Psoas muscle (tissue), 8 donors: ENCODE measurements at regions of chrX and their contacts with region 1.

Region 1: GRCh38 chrX:45322382-45322781 is 121.7 kb upstream of the DIPK2B start:
- DNase-seq: no peak
- ATAC-seq: peak in 3 of 4 donors; percentile 30 to 62 (median 56)
- H3K4me3 ChIP-seq: no peak overlapping the region
- H3K27ac ChIP-seq: no peak overlapping the region
- H3K4me1 ChIP-seq: no peaks in the 10 kb centered on the region
- H3K27me3 ChIP-seq: peaks cover 0 to 20% (median 0%) of the 10 kb centered on the region in 3 donors
- CTCF ChIP-seq: peak; percentile 47

Region 2: DNA sequence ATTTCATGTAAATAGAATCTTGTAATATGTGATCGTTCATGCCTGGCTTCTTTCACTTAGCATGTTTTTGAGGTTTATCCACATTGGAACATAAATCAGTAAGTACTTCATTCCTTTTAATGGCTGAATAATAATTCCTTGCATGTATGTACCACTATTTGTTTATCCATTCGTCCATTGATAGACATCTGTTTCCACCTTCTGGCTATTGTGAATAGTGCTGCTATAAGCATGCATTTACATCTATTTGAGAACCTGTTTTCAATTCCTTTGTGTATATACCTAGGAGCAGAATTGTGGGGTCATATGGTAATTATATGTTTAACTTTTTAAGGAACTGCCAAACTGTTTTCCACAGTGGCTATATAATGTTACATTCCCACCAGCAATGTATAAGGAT is 235.0 kb after region 1 on chrX:
- intact Hi-C with region 1: loop called in 1 of 2 experiments (anchors 5 kb)
- DNase-seq: no peak
- ATAC-seq: no peak
- H3K4me3 ChIP-seq: no peak overlapping the region
- H3K27ac ChIP-seq: no peak overlapping the region
- H3K4me1 ChIP-seq: no peaks in the 10 kb centered on the region
- H3K27me3 ChIP-seq: peaks cover 0 to 16% (median 0%) of the 10 kb centered on the region in 3 donors
- CTCF ChIP-seq: peak; percentile 31

Region 3: DNA sequence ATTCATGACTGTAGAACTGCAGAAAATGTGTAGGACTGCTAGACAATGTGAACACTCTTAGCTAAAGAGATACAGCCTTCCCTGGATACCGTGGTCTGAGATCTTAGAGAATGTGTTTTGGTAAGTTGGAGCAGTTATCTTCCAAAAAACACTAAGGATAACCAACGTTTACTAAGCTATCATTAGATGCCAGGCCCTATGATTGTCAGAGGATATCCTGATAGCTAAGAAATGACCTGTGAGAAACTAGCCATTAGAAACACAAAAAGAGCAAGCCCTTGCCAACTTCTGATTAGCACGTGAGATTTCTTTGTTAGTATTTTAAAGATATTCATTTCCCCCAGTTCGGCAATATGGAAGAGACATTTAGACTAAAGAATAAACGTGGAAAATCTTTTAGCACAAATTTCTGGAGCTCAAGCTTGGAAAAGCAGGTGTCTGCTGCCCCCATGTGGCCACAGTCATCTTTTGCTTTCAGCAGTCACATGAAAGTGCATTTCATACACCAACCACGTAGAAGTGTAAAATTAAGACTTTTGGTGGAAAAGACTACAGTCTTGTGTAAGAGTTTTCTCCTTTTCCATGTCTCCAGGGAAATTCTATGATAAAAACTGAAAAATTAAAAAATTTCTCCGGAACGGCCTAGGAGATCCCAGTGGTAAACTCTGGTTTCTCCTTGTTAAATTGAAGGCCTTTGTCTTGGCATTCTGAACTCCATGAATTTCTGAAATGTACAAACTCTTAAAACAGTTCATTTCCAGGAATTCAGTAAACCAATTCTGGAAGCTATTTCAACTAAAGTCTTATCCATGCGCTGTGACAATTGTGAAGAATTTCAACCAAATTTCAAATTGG is 1086.4 kb after region 1 on chrX:
- intact Hi-C with region 1: loop called (anchors 5 to 10 kb)
- DNase-seq: peak; percentile 61 to 83
- ATAC-seq: peak in 1 of 4 donors; percentile 63
- H3K4me3 ChIP-seq: no peak overlapping the region
- H3K27ac ChIP-seq: no peak overlapping the region
- H3K4me1 ChIP-seq: no peaks in the 10 kb centered on the region
- H3K27me3 ChIP-seq: peaks cover 0 to 9% (median 0%) of the 10 kb centered on the region in 3 donors
- CTCF ChIP-seq: peak; percentile 93